ENCODE measurements at regions of chr1 and their contacts with region 1.

Region 1: DNA sequence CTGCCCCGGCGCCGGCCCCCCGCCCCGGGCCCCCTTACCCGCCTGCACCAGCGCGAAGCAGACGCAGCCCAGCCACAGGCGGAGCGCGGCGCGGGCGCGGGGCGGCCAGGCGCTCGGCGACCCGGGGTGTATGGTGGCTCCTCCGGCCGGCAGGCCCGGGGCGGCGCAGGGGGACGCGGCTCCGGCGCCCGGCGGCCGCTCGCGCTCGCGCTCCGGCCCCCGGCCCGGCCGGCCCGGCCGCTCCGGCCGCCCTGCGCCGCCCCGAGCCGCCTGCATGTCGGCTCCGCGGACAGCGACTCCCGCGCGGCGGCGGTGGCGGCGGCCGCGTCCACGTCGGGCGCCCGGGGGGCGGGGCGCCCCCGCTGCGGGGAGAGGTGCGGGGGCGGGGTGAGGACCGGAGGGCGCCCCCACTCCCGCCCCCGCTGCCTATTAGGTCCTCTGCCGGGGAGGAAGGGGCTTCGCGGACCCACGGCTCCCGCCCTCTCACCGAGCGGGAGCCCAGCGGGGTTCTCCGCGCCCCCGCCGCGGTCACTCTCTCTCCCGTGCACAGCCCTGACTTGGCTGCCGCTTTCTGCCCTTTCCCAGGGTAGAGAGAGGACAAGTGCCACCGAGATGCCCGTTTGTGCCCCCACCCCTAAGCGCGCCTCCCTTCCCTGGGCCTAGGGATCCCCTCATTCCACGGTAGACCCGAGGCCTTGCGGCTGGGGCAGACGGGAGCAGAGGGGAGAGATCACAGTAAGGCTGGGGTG is at the start of gene FNDC5:
- DNase-seq: peak; percentile 10
- H3K4me3 Mint-ChIP-seq: no peak within 1 kb of the TSS
- H3K27ac Mint-ChIP-seq: no peak within 1 kb of the TSS
- H3K4me1 Mint-ChIP-seq: peaks cover 9% of the 10 kb centered on the region
- H3K27me3 Mint-ChIP-seq: peaks cover 40% of the 10 kb centered on the region
- total RNA-seq, gene FNDC5: not detected

Region 2: GRCh38 chr1:32521165-32521564 is 349.6 kb before region 1 on chr1:
- CTCF ChIA-PET with region 1: interaction called, 15 read pairs
- POLR2A ChIA-PET with region 1: no interaction called
- intact Hi-C with region 1: loop called (anchors 10 kb)
- DNase-seq: no peak
- H3K4me3 Mint-ChIP-seq: peak overlapping the region; percentile 64
- H3K27ac Mint-ChIP-seq: no peak overlapping the region
- H3K4me1 Mint-ChIP-seq: peaks cover 6% of the 10 kb centered on the region
- H3K27me3 Mint-ChIP-seq: peaks cover 7% of the 10 kb centered on the region

Region 3: GRCh38 chr1:32881871-32882850 is 11.4 kb after region 1 on chr1:
- CTCF ChIA-PET with region 1: interaction called, 10 read pairs
- POLR2A ChIA-PET with region 1: no interaction called
- intact Hi-C with region 1: no loop called
- DNase-seq: no peak
- H3K4me3 Mint-ChIP-seq: no peak overlapping the region
- H3K27ac Mint-ChIP-seq: no peak overlapping the region
- H3K4me1 Mint-ChIP-seq: peaks cover 4% of the 10 kb centered on the region
- H3K27me3 Mint-ChIP-seq: peaks cover 38% of the 10 kb centered on the region